Right cardiac atrium (tissue), 5 donors: ENCODE measurements at regions of chr5 and their contacts with region 1.

Region 1: DNA sequence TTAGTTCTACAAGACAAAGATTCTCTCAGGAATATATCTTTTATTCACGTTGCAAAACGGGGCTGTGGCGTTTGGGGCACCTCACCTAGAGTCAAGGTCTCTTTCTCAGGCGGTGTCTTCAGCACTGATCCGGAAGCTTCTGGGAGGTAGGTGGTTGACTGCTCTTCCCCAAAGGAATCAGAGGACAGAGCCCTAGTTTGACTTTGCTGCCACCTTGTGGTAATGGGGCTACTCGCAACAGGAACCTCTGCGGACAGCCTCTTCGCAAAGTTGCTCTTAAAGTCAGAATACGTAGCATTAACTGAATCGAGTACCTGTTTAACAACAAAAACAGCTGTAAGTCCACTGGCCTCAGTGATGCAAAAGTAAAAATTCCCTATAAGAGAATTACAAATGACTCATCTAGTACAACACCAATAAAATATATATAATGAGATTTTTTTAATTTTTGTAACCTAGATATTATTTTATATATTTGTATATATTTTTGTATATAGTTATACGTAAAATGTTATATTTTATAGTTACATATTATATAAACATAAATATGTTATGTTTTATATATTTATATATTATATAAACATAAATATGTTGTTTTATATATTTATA is 13.3 kb upstream of the GPX8 start:
- DNase-seq: peak; percentile 70 to 85 (median 78)
- ATAC-seq: peak; percentile 88 to 89
- H3K4me3 ChIP-seq: no peak overlapping the region
- H3K27ac ChIP-seq: no peak overlapping the region
- H3K4me1 ChIP-seq: no peaks in the 10 kb centered on the region
- H3K27me3 ChIP-seq: no peaks in the 10 kb centered on the region

Region 2: GRCh38 chr5:54905943-54906537 is 240.6 kb before region 1 on chr5:
- intact Hi-C with region 1: loop called (anchors 2 to 10 kb)
- DNase-seq: peak; percentile 64 to 87 (median 66)
- ATAC-seq: no peak
- H3K4me3 ChIP-seq: no peak overlapping the region
- H3K27ac ChIP-seq: no peak overlapping the region
- H3K4me1 ChIP-seq: no peaks in the 10 kb centered on the region
- H3K27me3 ChIP-seq: no peaks in the 10 kb centered on the region

Region 3: GRCh38 chr5:54944364-54944763 is 202.3 kb before region 1 on chr5:
- intact Hi-C with region 1: loop called in 2 of 4 experiments (anchors 5 kb)
- DNase-seq: no peak
- ATAC-seq: no peak
- H3K4me3 ChIP-seq: no peak overlapping the region
- H3K27ac ChIP-seq: no peak overlapping the region
- H3K4me1 ChIP-seq: no peaks in the 10 kb centered on the region
- H3K27me3 ChIP-seq: no peaks in the 10 kb centered on the region

Region 4: GRCh38 chr5:54959673-54960418 is 186.8 kb before region 1 on chr5:
- intact Hi-C with region 1: loop called in 1 of 4 experiments (anchors 10 kb)
- DNase-seq: no peak
- ATAC-seq: no peak
- H3K4me3 ChIP-seq: no peak overlapping the region
- H3K27ac ChIP-seq: no peak overlapping the region
- H3K4me1 ChIP-seq: no peaks in the 10 kb centered on the region
- H3K27me3 ChIP-seq: no peaks in the 10 kb centered on the region

Region 5: GRCh38 chr5:55052383-55052931 is 94.2 kb before region 1 on chr5:
- intact Hi-C with region 1: no loop called
- DNase-seq: no peak
- ATAC-seq: no peak
- H3K4me3 ChIP-seq: no peak overlapping the region
- H3K27ac ChIP-seq: no peak overlapping the region
- H3K4me1 ChIP-seq: no peaks in the 10 kb centered on the region
- H3K27me3 ChIP-seq: no peaks in the 10 kb centered on the region